ENCODE measurements at regions of chr16 and their contacts with region 1.

Region 1: GRCh38 chr16:66618588-66619375 is 14.3 kb downstream of the CMTM3 start:
- DNase-seq: peak; percentile 89 to 94
- H3K4me3 ChIP-seq: no peak overlapping the region
- H3K27ac ChIP-seq: peak overlapping the region; percentile 54
- H3K4me1 ChIP-seq: peaks cover 31% of the 10 kb centered on the region
- H3K27me3 ChIP-seq: no peaks in the 10 kb centered on the region
- CTCF ChIP-seq: no peak

Region 2: DNA sequence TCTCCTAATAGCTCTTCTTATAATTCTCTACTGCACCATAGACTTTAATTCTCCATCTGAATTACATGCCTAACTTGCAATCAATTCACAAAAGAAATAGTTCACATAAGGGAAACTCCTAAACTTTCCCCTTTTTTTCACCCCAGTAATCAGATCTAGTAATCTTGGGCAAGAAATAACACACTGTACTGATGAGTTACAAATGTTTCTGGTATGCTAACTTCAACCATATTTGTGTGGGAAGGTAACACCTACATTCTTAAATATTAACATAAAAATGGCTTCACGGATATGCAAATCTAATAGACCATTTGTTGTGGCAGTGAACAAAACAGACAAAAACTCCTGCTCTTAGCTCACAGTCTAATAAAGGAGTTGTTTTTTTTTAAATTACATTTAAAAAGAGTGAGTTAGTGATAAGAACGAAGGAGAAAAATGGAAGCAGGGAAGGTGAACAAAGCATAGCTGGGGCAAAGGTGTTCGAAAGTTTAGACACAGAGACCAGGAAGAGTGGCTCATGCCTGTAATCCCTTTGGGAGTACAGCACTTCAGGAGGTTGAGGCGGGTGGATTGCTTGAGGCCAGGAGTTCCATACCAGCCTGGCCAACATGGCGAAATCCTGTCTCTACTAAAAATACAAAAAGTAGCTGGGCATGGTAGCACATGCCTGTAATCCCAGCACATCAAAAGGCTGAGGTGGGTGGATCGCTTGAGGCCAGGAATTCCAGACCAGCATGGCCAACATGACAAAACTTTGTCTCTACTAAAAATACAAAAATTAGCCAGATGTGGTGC is 20.5 kb after region 1 on chr16:
- CTCF ChIA-PET with region 1: interaction called, 8 read pairs
- POLR2A ChIA-PET with region 1: interaction called, 4 read pairs
- intact Hi-C with region 1: loop called (anchors 1 kb)
- DNase-seq: peak; percentile 14 to 61
- H3K4me3 ChIP-seq: no peak overlapping the region
- H3K27ac ChIP-seq: 0 out of 2 replicates have a peak overlapping the region, but pooled peaks have one; percentile 4
- H3K4me1 ChIP-seq: no peaks in the 10 kb centered on the region
- H3K27me3 ChIP-seq: no peaks in the 10 kb centered on the region
- CTCF ChIP-seq: no peak

Region 3: DNA sequence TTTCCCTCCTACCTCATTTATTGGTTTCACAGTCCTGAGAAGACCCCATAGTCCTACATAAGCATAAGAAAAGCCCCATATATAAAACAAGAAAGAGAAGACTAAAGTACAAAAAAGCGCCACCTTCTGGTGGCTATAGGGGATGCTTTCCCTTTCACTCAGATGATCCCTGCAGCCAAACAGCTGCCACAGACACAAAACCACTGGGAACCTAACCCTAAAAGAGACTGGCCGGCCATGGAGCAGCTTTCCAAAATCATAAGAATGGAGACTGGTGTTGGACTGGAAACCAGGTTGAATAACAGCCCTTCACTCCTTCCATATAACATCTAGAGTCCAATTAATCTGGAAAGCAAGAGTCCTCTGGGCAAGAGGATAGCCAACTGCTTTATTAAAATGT is 121.2 kb after region 1 on chr16:
- CTCF ChIA-PET with region 1: no interaction called
- POLR2A ChIA-PET with region 1: no interaction called
- intact Hi-C with region 1: no loop called
- DNase-seq: no peak
- H3K4me3 ChIP-seq: no peak overlapping the region
- H3K27ac ChIP-seq: no peak overlapping the region
- H3K4me1 ChIP-seq: peaks cover 36% of the 10 kb centered on the region
- H3K27me3 ChIP-seq: no peaks in the 10 kb centered on the region
- CTCF ChIP-seq: peak; percentile 76